ENCODE measurements at regions of chrX and their contacts with region 1.

Region 1: GRCh38 chrX:110412971-110413721 is 54.5 kb downstream of the RTL9 start:
- DNase-seq: peak; percentile 87 to 92
- H3K4me3 ChIP-seq: peak overlapping the region; percentile 15
- H3K4me1 ChIP-seq: peaks cover 16% of the 10 kb centered on the region
- H3K27me3 ChIP-seq: no peaks in the 10 kb centered on the region

Region 2: GRCh38 chrX:109709129-109709631 is 704.0 kb before region 1 on chrX:
- in situ Hi-C with region 1: loop called (anchors 25 kb)
- DNase-seq: no peak
- H3K4me3 ChIP-seq: no peak overlapping the region
- H3K4me1 ChIP-seq: no peaks in the 10 kb centered on the region
- H3K27me3 ChIP-seq: no peaks in the 10 kb centered on the region

Region 3: GRCh38 chrX:109760241-109760922 is 652.8 kb before region 1 on chrX:
- in situ Hi-C with region 1: no loop called
- DNase-seq: peak in 1 of 2 experiments; percentile 13
- H3K4me3 ChIP-seq: no peak overlapping the region
- H3K4me1 ChIP-seq: peaks cover 11% of the 10 kb centered on the region
- H3K27me3 ChIP-seq: peaks cover 31% of the 10 kb centered on the region

Region 4: DNA sequence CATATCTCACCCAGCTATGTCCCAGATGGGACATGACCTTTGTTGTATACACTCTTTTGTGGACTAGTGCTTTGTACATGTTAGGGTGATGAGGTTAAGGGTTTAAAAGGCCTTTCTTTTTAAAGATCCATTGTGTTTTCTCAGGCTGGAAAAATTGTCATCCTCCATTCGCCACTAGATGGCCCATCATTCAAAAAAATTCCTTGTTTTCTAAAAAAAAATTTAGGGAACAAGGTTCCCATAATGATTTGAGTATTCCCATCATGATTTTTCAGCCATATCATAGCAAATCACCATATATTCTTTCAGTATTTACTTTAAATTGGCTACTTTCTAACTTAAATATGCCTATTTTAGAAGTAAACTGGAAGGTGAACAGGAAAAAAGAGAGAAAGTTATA is 502.1 kb before region 1 on chrX:
- in situ Hi-C with region 1: loop called (anchors 25 kb)
- DNase-seq: peak in 1 of 2 experiments; percentile 32
- H3K4me3 ChIP-seq: no peak overlapping the region
- H3K4me1 ChIP-seq: no peaks in the 10 kb centered on the region
- H3K27me3 ChIP-seq: peaks cover 4% of the 10 kb centered on the region

Region 5: DNA sequence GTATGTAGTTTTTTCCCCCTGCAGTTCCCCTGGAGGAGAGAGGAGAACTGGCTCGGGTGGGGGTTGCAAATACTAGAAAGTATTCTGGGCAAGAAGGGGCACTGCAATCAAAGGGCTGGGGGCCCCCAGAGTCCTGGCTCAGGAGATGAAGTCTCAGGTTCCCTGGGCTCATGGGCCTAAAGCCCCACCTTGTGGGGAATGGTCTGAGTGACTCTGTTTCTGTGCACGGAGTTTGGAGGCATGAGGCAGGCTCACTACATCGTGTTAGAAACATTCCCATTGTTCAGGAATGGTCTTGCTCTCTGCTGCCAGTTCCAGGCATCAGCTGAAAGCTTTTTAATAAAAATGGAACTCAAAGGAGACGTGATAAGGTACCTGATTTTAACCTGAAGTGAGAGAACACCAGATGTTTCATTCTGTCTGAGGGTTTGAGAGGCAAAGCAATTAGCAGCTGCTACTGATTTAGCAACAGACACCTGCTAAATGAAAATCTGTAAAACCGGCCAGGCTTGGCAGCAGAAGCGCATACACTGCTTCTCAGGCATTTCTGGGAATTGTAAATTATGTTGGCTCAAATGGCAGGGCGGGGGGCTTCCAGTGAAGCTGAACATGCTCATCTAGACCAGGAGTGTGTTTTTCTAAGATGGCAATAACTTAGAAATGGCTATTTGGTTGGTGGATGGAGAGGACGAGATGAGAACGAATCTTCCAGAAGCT is 287.5 kb before region 1 on chrX:
- in situ Hi-C with region 1: no loop called
- DNase-seq: peak in 1 of 2 experiments; percentile 29
- H3K4me3 ChIP-seq: no peak overlapping the region
- H3K4me1 ChIP-seq: peaks cover 7% of the 10 kb centered on the region; the same call in 1 of the 2 replicates
- H3K27me3 ChIP-seq: no peaks in the 10 kb centered on the region

Region 6: GRCh38 chrX:110156167-110156754 is 256.9 kb before region 1 on chrX:
- in situ Hi-C with region 1: loop called (anchors 5 kb)
- DNase-seq: peak in 1 of 2 experiments; percentile 9
- H3K4me3 ChIP-seq: no peak overlapping the region
- H3K4me1 ChIP-seq: no peaks in the 10 kb centered on the region
- H3K27me3 ChIP-seq: no peaks in the 10 kb centered on the region

Measured in HAP-1 (cell line).